ENCODE measurements at regions of chr5 and their contacts with region 1.

Region 1: DNA sequence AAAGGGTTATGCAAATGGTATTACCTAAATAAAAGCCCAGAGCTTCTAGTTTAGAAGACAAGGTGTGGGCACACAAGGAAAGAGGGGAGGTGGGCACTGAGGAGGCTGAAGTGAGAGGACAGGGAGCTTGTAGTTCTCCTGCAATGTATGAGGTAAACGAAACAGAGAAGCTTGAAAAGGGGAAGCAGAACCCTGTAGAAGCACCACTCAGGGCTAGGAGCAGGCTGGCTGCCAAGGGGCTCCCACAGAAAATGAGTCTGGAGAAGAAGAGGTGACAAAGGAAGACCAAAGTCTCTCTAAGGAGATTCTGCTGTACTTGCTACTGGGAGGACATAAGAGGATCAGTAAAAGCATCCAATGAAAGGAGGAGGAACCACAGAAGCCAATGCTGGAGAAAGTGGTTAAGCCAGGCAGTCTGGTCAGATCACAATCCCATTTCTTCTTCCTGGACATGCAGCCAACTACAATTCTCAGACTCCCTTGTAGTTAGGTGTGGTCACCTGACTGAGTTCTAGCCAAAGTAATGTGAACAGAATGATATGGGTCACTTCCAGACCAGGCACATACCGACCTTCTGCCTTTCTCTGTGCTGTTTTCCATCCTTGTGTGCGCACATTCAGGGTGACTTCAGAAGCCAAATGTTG is 174.5 kb upstream of the MAP3K1 start:
- DNase-seq: peak; percentile 25 to 56
- ATAC-seq: no peak
- H3K4me3 ChIP-seq: no peak overlapping the region
- H3K27ac ChIP-seq: no peak overlapping the region
- H3K4me1 ChIP-seq: no peaks in the 10 kb centered on the region
- H3K27me3 ChIP-seq: no peaks in the 10 kb centered on the region
- CTCF ChIP-seq: no peak

Region 2: GRCh38 chr5:56070851-56071465 is 569.9 kb before region 1 on chr5:
- intact Hi-C with region 1: no loop called
- DNase-seq: no peak
- ATAC-seq: no peak
- H3K4me3 ChIP-seq: no peak overlapping the region
- H3K27ac ChIP-seq: no peak overlapping the region
- H3K4me1 ChIP-seq: peaks cover 6% of the 10 kb centered on the region
- H3K27me3 ChIP-seq: no peaks in the 10 kb centered on the region
- CTCF ChIP-seq: no peak

Region 3: GRCh38 chr5:57082441-57083067 is 441.7 kb after region 1 on chr5:
- intact Hi-C with region 1: loop called in 1 of 2 experiments (anchors 10 kb)
- DNase-seq: no peak
- ATAC-seq: no peak
- H3K4me3 ChIP-seq: no peak overlapping the region
- H3K27ac ChIP-seq: no peak overlapping the region
- H3K4me1 ChIP-seq: no peaks in the 10 kb centered on the region
- H3K27me3 ChIP-seq: no peaks in the 10 kb centered on the region
- CTCF ChIP-seq: no peak